ENCODE measurements at regions of chr1 and their contacts with region 1.

Region 1: GRCh38 chr1:86714561-86715244 is 10.3 kb downstream of the SH3GLB1 start:
- DNase-seq: no peak
- H3K4me3 ChIP-seq: no peak overlapping the region
- H3K27ac ChIP-seq: no peak overlapping the region
- H3K4me1 ChIP-seq: no peaks in the 10 kb centered on the region
- H3K27me3 ChIP-seq: no peaks in the 10 kb centered on the region
- CTCF ChIP-seq: no peak
- EP300 ChIP-seq: no peak
- POLR2A ChIP-seq: no peak
- RAD21 ChIP-seq: no peak

Region 2: DNA sequence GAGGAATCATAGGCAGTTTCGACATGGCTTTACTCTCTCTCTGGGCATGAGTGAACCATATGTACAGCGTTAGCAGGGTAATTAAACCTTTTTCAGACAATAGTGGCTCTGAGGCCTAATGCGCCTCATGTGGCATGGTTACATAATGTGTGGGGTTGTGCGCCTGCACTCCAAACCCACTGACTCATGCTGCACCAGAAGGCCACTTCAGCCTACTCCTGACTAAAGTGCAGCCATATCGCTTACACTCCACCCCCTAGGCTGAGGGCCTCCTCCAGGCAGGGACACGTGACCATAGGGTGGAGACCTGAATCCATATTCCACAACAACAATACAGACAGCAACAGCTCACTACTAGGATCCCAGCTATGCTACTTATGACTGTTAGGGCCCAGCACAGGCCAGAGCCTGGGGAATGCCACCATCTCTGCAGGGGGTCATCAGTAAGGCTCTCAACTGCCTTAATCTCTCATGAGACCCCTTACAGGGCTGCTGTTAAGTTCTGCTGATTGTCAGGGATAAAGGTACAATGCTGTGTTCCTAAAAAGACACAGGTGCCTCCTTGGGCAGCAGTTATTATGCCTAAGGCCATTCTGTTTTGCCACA is 305.2 kb before region 1 on chr1:
- CTCF ChIA-PET with region 1: no interaction called
- POLR2A ChIA-PET with region 1: no interaction called
- DNase-seq: no peak
- H3K4me3 ChIP-seq: no peak overlapping the region
- H3K27ac ChIP-seq: no peak overlapping the region
- H3K4me1 ChIP-seq: no peaks in the 10 kb centered on the region
- H3K27me3 ChIP-seq: no peaks in the 10 kb centered on the region
- CTCF ChIP-seq: no peak
- EP300 ChIP-seq: no peak
- POLR2A ChIP-seq: no peak
- RAD21 ChIP-seq: no peak

Region 3: GRCh38 chr1:86704458-86704971 is 10.2 kb before region 1 on chr1 and contains the start of gene SH3GLB1:
- CTCF ChIA-PET with region 1: interaction called, 38 read pairs
- POLR2A ChIA-PET with region 1: interaction called, 6 read pairs
- DNase-seq: peak; percentile 54 to 98
- H3K4me3 ChIP-seq: peak within 1 kb of the TSS; percentile 70 to 83 (median 82)
- H3K27ac ChIP-seq: peak within 1 kb of the TSS; percentile 84
- H3K4me1 ChIP-seq: peaks cover 0 to 7% (median 3%) of the 10 kb centered on the region in 4 experiments; a peak in 4 of 7 replicates
- H3K27me3 ChIP-seq: no peaks in the 10 kb centered on the region; a peak in 1 of 7 replicates
- CTCF ChIP-seq: peak; percentile 70 to 84 (median 82)
- EP300 ChIP-seq: 0 out of 3 replicates have a peak, but pooled peaks of 1 of the 2 experiments have one; percentile 15
- POLR2A ChIP-seq: peak; percentile 71 to 76
- RAD21 ChIP-seq: peak; percentile 45 to 65
- total RNA-seq, gene SH3GLB1: 39.4 and 43.1 TPM in 2 replicates

Region 4: DNA sequence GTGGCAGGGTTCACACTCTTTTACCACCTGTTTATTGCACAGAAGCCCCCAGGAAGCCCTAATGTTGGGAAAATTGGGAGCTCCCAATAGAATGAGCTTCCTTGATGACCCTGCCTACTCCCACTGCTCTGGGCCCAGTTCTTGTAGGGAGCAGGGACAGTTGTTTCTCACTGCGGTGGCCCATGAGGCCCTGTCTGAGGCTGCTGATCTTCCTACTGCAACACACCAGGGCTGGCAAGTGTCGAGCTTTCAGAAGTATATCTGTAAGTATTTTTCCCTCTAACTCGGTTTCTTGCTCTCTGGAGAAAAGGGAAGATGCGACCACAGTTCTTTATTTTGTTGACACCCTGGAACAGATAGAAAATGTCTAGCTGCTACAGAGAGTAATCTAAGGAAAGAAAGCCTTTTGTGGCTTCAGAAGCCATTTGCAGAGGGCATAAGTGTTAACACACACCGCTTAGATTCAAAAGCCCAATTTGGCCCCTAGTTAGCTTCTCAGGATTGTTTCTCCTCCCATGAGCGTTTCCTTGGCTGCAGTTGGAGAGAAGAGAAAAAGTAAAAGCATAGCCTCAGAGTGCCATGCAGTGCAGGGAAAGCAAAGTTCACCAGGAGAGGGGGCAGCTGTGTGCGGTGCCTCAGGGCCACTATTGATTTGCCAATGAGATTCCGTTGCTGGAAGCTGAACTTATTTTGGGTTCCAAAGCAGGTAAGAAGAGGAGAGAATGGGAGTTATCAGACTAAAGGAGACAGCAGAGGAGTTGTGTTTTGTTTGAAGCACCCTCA is 96.6 kb after region 1 on chr1:
- CTCF ChIA-PET with region 1: no interaction called
- POLR2A ChIA-PET with region 1: no interaction called
- DNase-seq: peak; percentile 33 to 52
- H3K4me3 ChIP-seq: no peak overlapping the region
- H3K27ac ChIP-seq: no peak overlapping the region
- H3K4me1 ChIP-seq: peaks cover 0 to 3% (median 1%) of the 10 kb centered on the region in 4 experiments; a peak in 3 of 7 replicates
- H3K27me3 ChIP-seq: no peaks in the 10 kb centered on the region
- CTCF ChIP-seq: peak; percentile 59 to 73 (median 67)
- EP300 ChIP-seq: no peak
- POLR2A ChIP-seq: no peak
- RAD21 ChIP-seq: peak; percentile 57 to 67

Measured in H1 (cell line).